Caco-2 (cell line): ENCODE measurements at regions of chr12 and their contacts with region 1.

Region 1: GRCh38 chr12:121550974-121551634 is 29.7 kb downstream of the KDM2B start:
- DNase-seq: peak in 1 of 2 experiments; percentile 37
- H3K4me3 ChIP-seq: no peak overlapping the region
- H3K4me3 Mint-ChIP-seq: no peak overlapping the region
- H3K27ac Mint-ChIP-seq: no peak overlapping the region
- H3K4me1 ChIP-seq: no peaks in the 10 kb centered on the region
- H3K4me1 Mint-ChIP-seq: no peaks in the 10 kb centered on the region
- H3K27me3 ChIP-seq: no peaks in the 10 kb centered on the region
- H3K27me3 Mint-ChIP-seq: no peaks in the 10 kb centered on the region
- CTCF ChIP-seq: no peak

Region 2: GRCh38 chr12:121579981-121580868 is 29.1 kb after region 1 on chr12:
- CTCF ChIA-PET with region 1: interaction called, 10 read pairs
- POLR2A ChIA-PET with region 1: no interaction called
- intact Hi-C with region 1: loop called (anchors 2 kb)
- DNase-seq: peak; percentile 81 to 85
- H3K4me3 ChIP-seq: peak overlapping the region; percentile 76
- H3K4me3 Mint-ChIP-seq: peak overlapping the region; percentile 93
- H3K27ac Mint-ChIP-seq: peak overlapping the region; percentile 96
- H3K4me1 ChIP-seq: peaks cover 53% of the 10 kb centered on the region
- H3K4me1 Mint-ChIP-seq: peaks cover 20% of the 10 kb centered on the region
- H3K27me3 ChIP-seq: no peaks in the 10 kb centered on the region
- H3K27me3 Mint-ChIP-seq: no peaks in the 10 kb centered on the region
- CTCF ChIP-seq: no peak

Region 3: GRCh38 chr12:121626087-121626852 is 75.2 kb after region 1 on chr12 and contains the start of gene ORAI1:
- CTCF ChIA-PET with region 1: interaction called, 77 read pairs
- POLR2A ChIA-PET with region 1: interaction called, 4 read pairs
- intact Hi-C with region 1: loop called (anchors 1 kb)
- DNase-seq: peak; percentile 95 to 99
- H3K4me3 ChIP-seq: peak within 1 kb of the TSS; percentile 86
- H3K4me3 Mint-ChIP-seq: peak within 1 kb of the TSS; percentile 84
- H3K27ac Mint-ChIP-seq: peak within 1 kb of the TSS; percentile 90
- H3K4me1 ChIP-seq: peaks cover 21% of the 10 kb centered on the region
- H3K4me1 Mint-ChIP-seq: peaks cover 7% of the 10 kb centered on the region
- H3K27me3 ChIP-seq: no peaks in the 10 kb centered on the region
- H3K27me3 Mint-ChIP-seq: no peaks in the 10 kb centered on the region
- CTCF ChIP-seq: no peak
- total RNA-seq, gene ORAI1: 33.9 and 34.2 TPM in 2 replicates

Region 4: GRCh38 chr12:121668750-121669520 is 117.8 kb after region 1 on chr12:
- CTCF ChIA-PET with region 1: interaction called, 93 read pairs
- POLR2A ChIA-PET with region 1: interaction called, 8 read pairs
- intact Hi-C with region 1: loop called (anchors 1 kb)
- DNase-seq: peak; percentile 72
- H3K4me3 ChIP-seq: peak overlapping the region; percentile 33
- H3K4me3 Mint-ChIP-seq: peak overlapping the region; percentile 86
- H3K27ac Mint-ChIP-seq: peak overlapping the region; percentile 91
- H3K4me1 ChIP-seq: peaks cover 23% of the 10 kb centered on the region
- H3K4me1 Mint-ChIP-seq: peaks cover 17% of the 10 kb centered on the region
- H3K27me3 ChIP-seq: no peaks in the 10 kb centered on the region
- H3K27me3 Mint-ChIP-seq: no peaks in the 10 kb centered on the region
- CTCF ChIP-seq: peak; percentile 61 to 82

Region 5: GRCh38 chr12:121688966-121689365 is 137.9 kb after region 1 on chr12:
- CTCF ChIA-PET with region 1: interaction called, 21 read pairs
- POLR2A ChIA-PET with region 1: no interaction called
- intact Hi-C with region 1: no loop called
- DNase-seq: no peak
- H3K4me3 ChIP-seq: no peak overlapping the region
- H3K4me3 Mint-ChIP-seq: no peak overlapping the region
- H3K27ac Mint-ChIP-seq: no peak overlapping the region
- H3K4me1 ChIP-seq: no peaks in the 10 kb centered on the region
- H3K4me1 Mint-ChIP-seq: no peaks in the 10 kb centered on the region
- H3K27me3 ChIP-seq: no peaks in the 10 kb centered on the region
- H3K27me3 Mint-ChIP-seq: no peaks in the 10 kb centered on the region
- CTCF ChIP-seq: no peak